Right cardiac atrium (tissue), 5 donors: ENCODE measurements at regions of chr21 and their contacts with region 1.

Region 1: GRCh38 chr21:32403201-32403777 is 9.2 kb upstream of the EVA1C start:
- DNase-seq: peak; percentile 70 to 84 (median 77)
- ATAC-seq: peak; percentile 86 to 87
- H3K4me3 ChIP-seq: no peak overlapping the region
- H3K27ac ChIP-seq: no peak overlapping the region
- H3K4me1 ChIP-seq: no peaks in the 10 kb centered on the region
- H3K27me3 ChIP-seq: no peaks in the 10 kb centered on the region

Region 2: DNA sequence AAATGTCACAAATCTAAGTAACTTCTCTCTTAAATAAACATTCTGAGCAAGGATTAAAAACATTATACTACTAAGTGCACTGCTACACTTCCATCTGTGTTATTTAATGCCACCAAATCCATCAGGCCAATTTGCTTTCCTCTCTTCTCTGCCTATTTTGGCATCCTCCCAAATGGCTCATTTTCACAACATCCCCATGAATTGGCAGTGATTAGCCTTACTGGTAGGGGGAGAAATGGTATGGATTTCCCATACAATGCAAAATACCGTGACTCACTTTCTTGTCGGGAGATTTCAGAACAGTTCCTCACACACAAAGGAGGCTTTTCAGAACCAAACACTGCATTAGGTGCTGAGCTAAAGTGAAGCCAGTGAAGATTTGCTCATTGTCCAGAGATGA is 320.1 kb before region 1 on chr21:
- intact Hi-C with region 1: no loop called
- DNase-seq: no peak
- ATAC-seq: no peak
- H3K4me3 ChIP-seq: no peak overlapping the region
- H3K27ac ChIP-seq: no peak overlapping the region
- H3K4me1 ChIP-seq: no peaks in the 10 kb centered on the region
- H3K27me3 ChIP-seq: no peaks in the 10 kb centered on the region

Region 3: DNA sequence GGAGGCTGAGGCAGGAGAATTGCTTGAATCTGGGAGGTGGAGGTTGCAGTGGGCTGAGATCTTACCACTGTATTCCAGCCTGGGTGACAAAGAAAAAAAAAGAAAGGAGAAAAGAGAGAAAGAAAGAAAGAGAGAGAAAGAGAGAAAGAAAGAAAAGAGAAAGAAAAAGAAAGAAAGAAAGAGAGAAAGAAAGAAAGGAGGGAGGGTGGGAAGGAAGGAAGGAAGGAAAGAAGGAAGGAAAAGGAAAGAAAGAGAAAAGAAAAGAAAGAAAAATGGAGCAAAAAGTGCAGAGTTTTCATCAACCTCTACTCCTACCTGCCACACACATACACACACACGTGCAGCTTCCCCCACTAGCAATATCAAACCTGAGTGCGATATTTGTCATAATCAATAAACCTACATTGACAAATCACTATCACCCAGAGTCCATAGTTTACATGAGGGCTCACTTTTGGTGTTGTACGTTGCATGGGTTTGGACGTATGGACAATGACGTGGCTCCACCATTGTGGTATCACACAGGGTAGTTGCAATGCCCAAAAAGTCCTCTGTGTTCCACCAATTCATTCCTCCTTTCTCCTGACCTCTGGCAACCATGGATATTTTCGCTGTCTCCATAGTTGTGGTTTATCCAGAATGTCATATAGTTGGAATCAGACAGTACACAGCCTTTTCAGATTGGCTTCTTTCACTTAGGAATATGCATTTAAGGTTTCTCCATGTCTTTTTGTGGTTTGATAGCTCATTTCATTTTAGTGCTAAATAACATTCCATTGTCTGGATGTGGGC is 45.7 kb after region 1 on chr21:
- intact Hi-C with region 1: no loop called
- DNase-seq: no peak
- ATAC-seq: no peak
- H3K4me3 ChIP-seq: no peak overlapping the region
- H3K27ac ChIP-seq: no peak overlapping the region
- H3K4me1 ChIP-seq: peaks cover 14% of the 10 kb centered on the region
- H3K27me3 ChIP-seq: no peaks in the 10 kb centered on the region

Region 4: GRCh38 chr21:32597205-32597604 is 193.9 kb after region 1 on chr21:
- intact Hi-C with region 1: loop called in 3 of 4 experiments (anchors 2 to 10 kb)
- DNase-seq: no peak
- ATAC-seq: no peak
- H3K4me3 ChIP-seq: no peak overlapping the region
- H3K27ac ChIP-seq: no peak overlapping the region
- H3K4me1 ChIP-seq: no peaks in the 10 kb centered on the region
- H3K27me3 ChIP-seq: no peaks in the 10 kb centered on the region

Region 5: DNA sequence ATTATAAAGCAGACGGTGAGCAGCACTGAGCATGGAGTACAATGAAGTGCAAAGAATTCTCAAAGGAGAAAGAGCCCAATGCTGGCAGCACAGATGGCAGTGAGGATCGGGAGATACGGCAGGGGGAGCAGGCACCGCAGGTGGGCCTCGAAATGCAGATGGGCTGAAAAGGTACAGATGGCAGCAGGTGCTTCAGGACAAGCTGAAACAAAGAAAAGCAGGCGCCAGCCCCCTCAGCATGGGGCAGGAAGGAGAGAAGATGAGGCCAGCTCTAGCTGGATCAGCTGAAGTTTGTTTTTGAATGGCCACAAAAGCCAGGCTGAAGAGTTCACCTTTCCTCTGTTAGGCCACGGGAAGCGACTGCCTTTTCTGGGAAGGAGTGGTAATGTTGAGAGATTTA is 201.2 kb after region 1 on chr21:
- intact Hi-C with region 1: loop called in 3 of 4 experiments (anchors 2 to 10 kb)
- DNase-seq: no peak
- ATAC-seq: no peak
- H3K4me3 ChIP-seq: no peak overlapping the region
- H3K27ac ChIP-seq: no peak overlapping the region
- H3K4me1 ChIP-seq: no peaks in the 10 kb centered on the region
- H3K27me3 ChIP-seq: no peaks in the 10 kb centered on the region

Region 6: DNA sequence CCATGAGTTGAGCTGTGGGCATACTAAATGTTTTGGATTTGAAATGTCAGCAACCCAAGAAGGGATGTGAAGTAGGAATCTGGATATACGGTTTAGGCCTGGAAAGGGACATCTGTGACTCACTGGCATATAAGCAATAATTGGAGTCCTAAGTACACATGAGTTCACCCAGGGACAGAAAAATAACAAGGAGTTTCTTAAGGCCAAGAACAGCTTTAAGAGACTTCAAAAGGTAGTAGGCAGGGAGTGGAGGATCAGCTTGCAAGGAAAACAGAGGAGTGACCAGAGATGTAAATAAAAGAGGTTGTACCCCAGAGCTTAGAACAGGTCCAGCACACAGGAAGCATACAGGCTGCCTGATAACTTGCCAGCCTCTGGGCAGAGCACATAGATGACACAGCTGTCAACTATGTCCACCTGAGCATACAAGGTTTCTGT is 1048.4 kb after region 1 on chr21:
- intact Hi-C with region 1: no loop called
- DNase-seq: no peak
- ATAC-seq: peak in 1 of 2 donors; percentile 33
- H3K4me3 ChIP-seq: no peak overlapping the region
- H3K27ac ChIP-seq: no peak overlapping the region
- H3K4me1 ChIP-seq: peaks cover 1% of the 10 kb centered on the region
- H3K27me3 ChIP-seq: no peaks in the 10 kb centered on the region